Ascending aorta (tissue), 2 donors: ENCODE measurements at regions of chr9 and their contacts with region 1.

Region 1: DNA sequence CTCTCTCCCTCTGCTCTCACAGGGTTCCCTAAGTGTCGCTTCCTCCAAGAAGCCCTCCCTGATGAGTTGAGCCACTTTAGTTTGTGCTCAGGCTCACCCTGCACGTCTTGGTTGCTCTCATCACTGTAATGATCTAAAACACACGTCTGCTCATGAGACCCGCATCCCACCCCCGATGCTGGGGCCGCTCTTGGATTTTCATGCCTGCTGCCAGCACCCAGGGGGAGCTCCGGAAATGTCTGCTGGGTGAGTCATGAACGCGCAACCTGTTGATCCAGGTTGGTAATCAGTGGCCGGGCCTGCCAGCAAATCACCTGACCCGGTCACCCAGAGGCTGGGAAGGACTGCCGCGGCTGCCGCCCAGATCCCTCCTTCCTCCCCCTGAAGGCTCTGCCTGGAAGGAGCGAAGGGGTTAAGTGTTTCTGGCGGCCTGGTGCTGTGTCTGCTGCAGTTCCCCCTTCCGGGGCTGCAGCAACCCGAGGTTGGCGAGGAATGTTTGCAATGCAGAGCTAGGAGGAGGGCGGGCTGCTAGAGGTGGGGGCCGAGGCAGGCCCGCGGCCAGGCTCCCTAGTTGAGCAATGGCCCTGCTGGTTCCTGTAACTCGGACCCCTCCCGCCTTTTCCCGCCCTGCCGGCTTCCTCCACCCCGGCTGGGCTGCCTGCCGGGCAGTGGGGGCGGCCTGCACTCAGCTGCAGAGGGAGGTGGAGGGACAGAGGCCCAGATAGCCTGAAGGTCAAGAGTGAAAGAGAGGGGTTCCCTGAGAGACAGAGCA is 156.1 kb upstream of the IER5L start:
- DNase-seq: peak; percentile 74 to 96
- H3K4me3 ChIP-seq: peak overlapping the region; percentile 9 to 19
- H3K27ac ChIP-seq: peak overlapping the region; percentile 84 to 96
- H3K4me1 ChIP-seq: peaks cover 33 to 52% of the 10 kb centered on the region in 2 donors
- H3K27me3 ChIP-seq: no peaks in the 10 kb centered on the region
- CTCF ChIP-seq: no peak

Region 2: DNA sequence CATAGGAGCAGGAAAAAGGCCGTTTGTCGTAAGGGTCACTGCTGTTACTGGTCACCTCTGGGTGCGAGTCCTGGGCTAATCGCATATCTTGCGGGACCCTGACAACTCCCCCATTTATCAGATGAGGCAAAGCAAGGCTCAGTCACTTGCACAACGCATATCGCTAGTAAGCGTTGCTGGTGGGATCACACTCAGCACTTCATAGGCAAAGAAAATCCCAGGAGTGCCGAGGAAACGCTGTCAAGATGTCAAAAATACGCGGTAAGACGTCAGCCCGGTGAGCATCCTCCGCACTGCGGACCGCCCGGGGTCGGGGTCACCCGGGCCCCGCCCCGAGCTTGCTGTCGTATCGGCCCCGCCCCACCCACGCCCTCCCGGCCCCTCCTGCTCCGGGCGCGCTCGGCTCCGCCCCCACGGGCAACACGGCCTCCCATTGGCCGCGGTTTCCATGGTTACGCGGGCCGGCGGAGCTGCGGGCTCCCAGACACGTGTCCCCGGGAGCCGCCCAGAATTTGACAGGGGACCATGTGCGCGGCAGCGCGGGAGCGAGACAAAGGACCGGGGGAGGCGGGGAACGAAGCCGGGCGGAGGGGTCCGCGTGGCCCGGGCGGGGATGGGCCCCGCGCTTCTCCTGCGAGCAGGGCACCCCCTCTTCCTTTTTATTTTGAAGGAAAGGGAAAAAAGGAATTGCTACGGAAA is 75.9 kb before region 1 on chr9:
- intact Hi-C with region 1: loop called (anchors 5 kb)
- DNase-seq: peak; percentile 71 to 93
- H3K4me3 ChIP-seq: peak overlapping the region; percentile 20 to 53
- H3K27ac ChIP-seq: peak overlapping the region in 1 of 2 donors; percentile 20
- H3K4me1 ChIP-seq: peaks cover 14 to 18% of the 10 kb centered on the region in 2 donors
- H3K27me3 ChIP-seq: no peaks in the 10 kb centered on the region
- CTCF ChIP-seq: no peak

Region 3: DNA sequence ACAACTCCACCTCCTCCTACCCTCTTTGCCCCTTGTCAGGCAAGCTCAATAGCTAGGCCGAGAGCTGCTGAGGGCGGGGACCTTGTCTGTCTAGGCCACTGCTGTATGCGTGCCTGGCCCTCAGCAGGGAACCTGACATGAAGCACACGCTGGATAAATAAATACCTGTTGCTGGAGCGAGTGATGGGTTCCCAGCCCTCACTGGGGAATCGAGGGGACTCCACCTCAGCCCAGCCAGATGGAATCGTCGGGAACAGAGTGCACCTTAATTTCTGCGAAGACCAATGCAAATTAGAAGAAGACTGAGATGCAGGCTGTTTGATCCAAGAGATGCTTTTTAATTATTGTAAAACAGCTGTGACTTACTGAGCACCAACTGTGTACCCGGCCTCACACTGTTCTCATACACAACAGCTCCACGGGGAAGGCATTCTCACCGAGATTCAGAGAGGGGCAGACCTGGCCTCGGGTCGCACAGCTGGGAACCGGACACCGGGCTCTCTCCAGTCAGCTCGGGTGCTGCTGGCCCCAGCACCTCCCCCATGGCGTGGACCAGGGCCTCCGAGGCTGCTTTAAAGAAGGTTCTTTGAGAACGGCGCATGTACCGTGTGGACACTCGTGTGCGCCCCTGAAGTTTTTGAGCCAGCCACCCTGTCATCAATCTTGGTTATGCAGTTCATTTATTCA is 46.4 kb before region 1 on chr9:
- intact Hi-C with region 1: no loop called
- DNase-seq: peak in 1 of 2 donors; percentile 41
- H3K4me3 ChIP-seq: no peak overlapping the region
- H3K27ac ChIP-seq: no peak overlapping the region
- H3K4me1 ChIP-seq: no peaks in the 10 kb centered on the region
- H3K27me3 ChIP-seq: no peaks in the 10 kb centered on the region
- CTCF ChIP-seq: no peak

Region 4: GRCh38 chr9:129320575-129321263 is 13.4 kb before region 1 on chr9:
- intact Hi-C with region 1: loop called (anchors 2 kb)
- DNase-seq: peak in 1 of 2 donors; percentile 88
- H3K4me3 ChIP-seq: peak overlapping the region; percentile 54 to 60
- H3K27ac ChIP-seq: peak overlapping the region; percentile 92 to 94
- H3K4me1 ChIP-seq: peaks cover 30 to 66% of the 10 kb centered on the region in 2 donors
- H3K27me3 ChIP-seq: no peaks in the 10 kb centered on the region
- CTCF ChIP-seq: peak in 2 of 3 experiments; percentile 2 to 17

Region 5: DNA sequence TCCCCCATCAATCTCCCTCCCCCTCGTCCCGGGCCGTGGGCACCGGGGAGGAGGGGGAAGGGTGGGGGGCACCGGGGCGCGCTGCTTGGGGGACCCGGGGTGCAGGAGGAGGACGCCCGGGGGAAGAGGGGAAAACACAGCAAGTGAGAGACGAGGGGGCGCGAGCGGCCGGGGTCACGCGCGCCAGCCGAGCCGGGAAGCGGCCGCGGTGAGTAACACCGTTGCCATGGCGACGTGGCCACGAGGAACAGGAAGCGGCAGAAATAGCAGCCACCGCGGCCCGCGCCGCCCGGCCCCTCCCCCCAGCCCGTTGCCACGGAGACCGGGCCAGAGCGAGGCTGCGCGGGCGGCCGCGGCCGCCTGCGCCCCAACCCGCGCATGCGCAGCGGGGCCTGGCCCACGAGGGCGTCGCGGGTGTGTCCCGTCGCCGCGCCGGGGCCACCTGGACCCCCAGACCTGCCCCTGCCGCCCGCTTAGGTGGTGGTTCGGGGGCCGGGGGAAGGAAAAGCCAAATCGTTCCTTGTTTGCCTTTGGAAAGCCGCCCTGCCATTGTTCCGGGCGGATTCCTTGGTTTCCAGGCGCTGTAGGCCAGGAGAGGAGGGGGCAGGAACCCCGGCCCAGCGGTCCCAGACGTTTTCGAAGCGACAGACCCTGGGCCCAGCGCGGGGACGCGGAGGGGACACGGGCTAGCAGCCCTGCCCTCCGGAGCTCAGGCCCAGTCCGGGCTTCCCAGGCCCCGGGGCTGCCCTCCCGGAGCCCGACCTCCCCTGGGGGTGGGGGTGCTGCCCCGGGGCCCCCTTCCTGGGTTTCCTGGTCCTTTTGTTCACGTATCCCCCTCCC is 79.6 kb after region 1 on chr9:
- intact Hi-C with region 1: loop called (anchors 2 kb)
- DNase-seq: peak; percentile 96 to 99
- H3K4me3 ChIP-seq: peak overlapping the region; percentile 72 to 82
- H3K27ac ChIP-seq: peak overlapping the region; percentile 99 to 100
- H3K4me1 ChIP-seq: peaks cover 12 to 28% of the 10 kb centered on the region in 2 donors
- H3K27me3 ChIP-seq: no peaks in the 10 kb centered on the region
- CTCF ChIP-seq: peak in 2 of 3 experiments; percentile 2 to 26

Region 6: DNA sequence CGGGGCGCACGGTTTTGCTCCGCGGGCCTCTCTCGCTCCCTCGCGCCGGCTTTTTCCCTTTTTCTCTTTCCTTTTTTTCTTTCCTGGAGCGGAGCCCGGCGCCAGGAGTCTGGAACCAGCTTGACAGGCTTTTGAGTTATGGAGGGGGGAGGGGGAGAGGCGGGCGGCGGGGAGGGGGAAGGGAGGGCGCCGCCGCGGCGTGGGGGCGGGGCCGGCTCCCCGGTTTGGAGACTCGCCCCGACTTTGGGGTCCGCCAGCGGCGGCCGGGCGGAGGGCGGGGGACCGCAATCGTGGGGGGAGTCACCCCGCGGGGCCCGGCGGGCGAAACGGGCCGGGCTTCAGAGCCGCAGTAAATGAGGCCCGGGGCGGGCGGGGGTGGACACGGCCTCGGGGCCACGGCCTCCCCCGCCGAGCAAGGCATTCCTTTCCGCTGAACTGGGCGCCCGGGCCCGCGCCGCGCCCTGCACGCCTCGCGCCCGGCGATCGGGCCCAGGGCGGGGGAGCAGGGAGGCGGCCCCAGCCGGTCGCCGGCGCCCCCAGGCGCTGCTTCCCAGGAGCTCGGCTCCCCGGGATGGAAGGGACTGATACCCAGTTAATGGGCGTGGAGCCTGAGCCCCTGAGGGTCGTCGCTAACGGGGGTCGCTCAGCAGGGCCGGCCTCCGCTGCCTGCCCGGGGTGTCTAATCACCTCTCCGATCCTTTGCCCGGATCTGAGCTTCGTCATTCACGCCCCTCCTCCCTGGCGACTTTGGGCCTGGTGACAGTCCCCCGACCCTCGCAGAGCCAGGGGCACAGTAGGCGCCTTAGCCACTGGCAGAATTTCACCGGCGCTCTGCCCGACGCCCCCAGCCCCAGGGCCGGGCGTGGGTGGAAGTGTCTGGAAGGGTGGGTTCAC is 148.6 kb after region 1 on chr9:
- intact Hi-C with region 1: loop called (anchors 2 kb)
- DNase-seq: peak in 1 of 2 donors; percentile 93
- H3K4me3 ChIP-seq: peak overlapping the region; percentile 54 to 63
- H3K27ac ChIP-seq: peak overlapping the region; percentile 98 to 100
- H3K4me1 ChIP-seq: peaks cover 32 to 64% of the 10 kb centered on the region in 2 donors
- H3K27me3 ChIP-seq: no peaks in the 10 kb centered on the region
- CTCF ChIP-seq: peak in 1 of 3 experiments; percentile 19